Posterior cingulate gyrus (tissue), 11 donors: ENCODE measurements at regions of chr2 and their contacts with region 1.

Region 1: DNA sequence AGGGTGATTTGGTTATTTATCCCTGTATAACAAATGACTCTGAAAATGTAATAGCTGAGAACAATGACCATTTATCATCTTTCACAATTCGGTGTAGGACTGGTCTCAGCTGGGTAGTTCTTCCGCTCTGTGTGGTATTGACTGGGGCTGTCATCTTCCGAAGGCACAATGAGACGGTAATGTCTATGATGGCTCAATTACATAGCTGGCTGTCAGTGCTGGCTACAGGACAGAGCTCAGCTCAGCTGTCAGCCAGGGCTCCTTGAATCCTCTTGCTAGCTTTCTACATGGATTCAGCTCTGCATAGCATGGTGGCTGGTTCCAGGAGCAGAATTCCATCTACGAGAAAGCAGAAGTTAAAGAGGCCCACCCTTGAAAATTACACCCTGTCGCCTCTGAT is 483.8 kb downstream of the TDRD15 start:
- DNase-seq: no peak

Region 2: GRCh38 chr2:22536133-22536532 is 928.6 kb after region 1 on chr2:
- intact Hi-C with region 1: loop called (anchors 10 kb)
- DNase-seq: no peak